Caco-2 (cell line): ENCODE measurements at regions of chr10 and their contacts with region 1.

Region 1: DNA sequence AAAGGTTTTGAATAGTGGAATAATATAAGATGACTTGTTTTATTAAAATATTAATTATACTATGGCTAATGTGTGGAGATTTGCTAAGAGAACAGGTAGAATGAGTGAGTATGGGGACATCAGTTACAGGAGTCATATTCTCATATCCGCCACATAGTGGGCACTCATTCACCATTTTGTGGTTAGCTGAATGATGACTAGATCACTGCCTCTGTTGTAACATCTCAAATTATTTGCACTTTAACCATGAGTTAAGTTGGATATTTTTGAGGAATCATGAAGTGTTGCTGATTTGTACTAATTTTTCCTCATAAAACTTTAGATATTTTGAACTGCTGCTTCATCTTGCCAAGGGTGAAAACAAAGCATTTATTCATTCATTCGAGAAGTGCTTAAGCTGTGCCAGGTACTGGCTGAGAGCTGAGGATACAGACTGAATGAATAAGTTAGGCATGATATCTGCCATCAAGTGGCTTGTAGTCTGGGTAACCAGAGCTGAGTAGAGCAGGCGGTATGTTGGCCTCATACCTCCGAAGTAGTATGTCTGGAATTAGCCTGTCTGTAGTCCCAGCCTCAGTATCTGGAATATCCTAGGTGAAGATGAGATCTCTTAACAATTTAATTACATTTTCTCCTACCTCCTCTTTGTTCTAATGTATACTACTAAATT is 100.5 kb downstream of the ZEB1 start:
- DNase-seq: no peak
- H3K4me3 ChIP-seq: no peak overlapping the region
- H3K4me3 Mint-ChIP-seq: no peak overlapping the region
- H3K27ac Mint-ChIP-seq: no peak overlapping the region
- H3K4me1 ChIP-seq: no peaks in the 10 kb centered on the region
- H3K4me1 Mint-ChIP-seq: no peaks in the 10 kb centered on the region
- H3K27me3 ChIP-seq: no peaks in the 10 kb centered on the region
- H3K27me3 Mint-ChIP-seq: peaks cover 6% of the 10 kb centered on the region
- CTCF ChIP-seq: no peak

Region 2: GRCh38 chr10:31431021-31431420 is 11.5 kb after region 1 on chr10:
- CTCF ChIA-PET with region 1: no interaction called
- POLR2A ChIA-PET with region 1: no interaction called
- intact Hi-C with region 1: loop called (anchors 1 kb)
- DNase-seq: no peak
- H3K4me3 ChIP-seq: no peak overlapping the region
- H3K4me3 Mint-ChIP-seq: no peak overlapping the region
- H3K27ac Mint-ChIP-seq: no peak overlapping the region
- H3K4me1 ChIP-seq: no peaks in the 10 kb centered on the region
- H3K4me1 Mint-ChIP-seq: no peaks in the 10 kb centered on the region
- H3K27me3 ChIP-seq: no peaks in the 10 kb centered on the region
- H3K27me3 Mint-ChIP-seq: peaks cover 15% of the 10 kb centered on the region
- CTCF ChIP-seq: no peak

Region 3: DNA sequence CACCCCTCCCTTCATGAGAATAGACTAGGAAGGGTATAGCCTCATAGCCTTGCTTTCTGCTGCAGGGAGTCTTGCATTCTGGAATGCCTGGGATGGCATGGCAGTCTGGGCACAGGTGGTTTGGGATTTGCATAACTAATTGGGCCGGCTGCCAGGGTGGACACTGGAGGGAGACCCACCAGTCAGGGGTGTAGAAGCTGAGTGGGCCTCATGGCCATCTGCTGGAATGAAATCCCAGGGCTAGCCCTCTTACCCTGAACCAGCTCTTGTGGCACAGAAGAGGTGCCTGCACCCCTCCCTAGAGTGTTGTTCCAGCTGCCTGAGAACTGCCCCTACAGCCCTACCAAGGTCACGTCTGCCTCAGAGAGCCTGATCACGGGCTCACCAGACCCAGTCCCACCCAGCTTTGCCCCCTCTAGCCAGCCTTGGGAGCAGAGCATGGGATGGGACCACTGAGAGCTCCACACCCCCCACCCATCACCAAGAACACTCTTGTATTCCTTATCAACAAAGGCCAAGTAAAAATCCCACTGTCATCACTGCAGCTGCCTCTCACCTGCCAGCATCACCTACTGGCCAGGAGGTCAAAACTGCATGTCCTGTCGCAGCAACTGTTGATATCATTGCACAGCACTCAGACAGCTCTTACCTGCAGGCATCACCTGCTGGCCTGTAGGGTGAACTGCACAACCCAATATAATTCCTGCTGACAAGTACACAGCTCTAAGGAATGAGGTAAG is 48.4 kb after region 1 on chr10:
- CTCF ChIA-PET with region 1: no interaction called
- POLR2A ChIA-PET with region 1: no interaction called
- intact Hi-C with region 1: no loop called
- DNase-seq: peak; percentile 47 to 61
- H3K4me3 ChIP-seq: no peak overlapping the region
- H3K4me3 Mint-ChIP-seq: no peak overlapping the region
- H3K27ac Mint-ChIP-seq: no peak overlapping the region
- H3K4me1 ChIP-seq: no peaks in the 10 kb centered on the region
- H3K4me1 Mint-ChIP-seq: no peaks in the 10 kb centered on the region
- H3K27me3 ChIP-seq: no peaks in the 10 kb centered on the region
- H3K27me3 Mint-ChIP-seq: no peaks in the 10 kb centered on the region
- CTCF ChIP-seq: peak; percentile 67 to 72